GM12878 (cell line): ENCODE measurements at regions of chr15 and their contacts with region 1.

Region 1: DNA sequence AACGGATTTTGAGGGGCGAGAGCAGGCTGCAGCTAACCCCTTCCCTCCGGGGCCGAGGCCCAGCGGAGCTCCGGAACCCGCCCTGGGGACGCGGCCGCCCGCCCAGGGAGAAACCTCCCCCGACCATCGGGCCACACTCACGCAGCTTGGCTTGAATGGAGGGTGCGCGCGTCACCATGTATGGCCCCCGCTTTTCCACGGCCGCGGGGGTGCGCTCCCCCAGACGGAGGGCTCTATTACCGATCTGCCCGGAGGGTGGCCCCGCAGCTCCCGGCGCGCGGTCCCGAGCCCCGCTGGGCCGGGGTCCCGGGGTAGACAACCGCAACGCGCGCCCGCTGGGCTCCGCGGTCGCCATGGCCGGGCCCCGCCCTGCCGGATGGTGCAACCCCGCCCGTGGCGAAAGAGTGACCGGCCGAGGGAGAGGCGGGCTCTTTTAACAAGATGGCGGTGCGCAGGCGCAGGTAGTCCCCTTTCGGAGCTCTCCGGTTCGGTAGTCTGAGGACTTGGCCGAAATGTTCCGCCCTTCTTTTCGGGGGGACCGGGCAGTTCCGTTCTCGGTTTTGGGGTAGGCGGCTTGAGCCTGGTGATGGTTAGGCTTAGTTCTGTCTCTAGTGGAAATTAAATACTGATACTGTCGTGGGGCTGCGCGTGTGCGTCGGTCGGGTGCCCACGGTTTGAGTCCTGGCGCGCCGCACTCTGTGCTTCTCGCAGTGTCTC is at the start of gene FAM219B:
- DNase-seq: peak; percentile 47
- ATAC-seq: peak; percentile 98
- H3K4me3 ChIP-seq: peak within 1 kb of the TSS; percentile 97
- H3K27ac ChIP-seq: peak within 1 kb of the TSS; percentile 76
- H3K4me1 ChIP-seq: peaks cover 6% of the 10 kb centered on the region
- H3K27me3 ChIP-seq: no peaks in the 10 kb centered on the region
- CTCF ChIP-seq: 0 out of 6 replicates have a peak, but pooled peaks of 1 of the 3 experiments have one; percentile 1
- EP300 ChIP-seq: no peak
- POLR2A ChIP-seq: peak; percentile 82
- RAD21 ChIP-seq: no peak
- polyA plus RNA-seq, gene FAM219B: 7.6 to 8.9 TPM

Region 2: DNA sequence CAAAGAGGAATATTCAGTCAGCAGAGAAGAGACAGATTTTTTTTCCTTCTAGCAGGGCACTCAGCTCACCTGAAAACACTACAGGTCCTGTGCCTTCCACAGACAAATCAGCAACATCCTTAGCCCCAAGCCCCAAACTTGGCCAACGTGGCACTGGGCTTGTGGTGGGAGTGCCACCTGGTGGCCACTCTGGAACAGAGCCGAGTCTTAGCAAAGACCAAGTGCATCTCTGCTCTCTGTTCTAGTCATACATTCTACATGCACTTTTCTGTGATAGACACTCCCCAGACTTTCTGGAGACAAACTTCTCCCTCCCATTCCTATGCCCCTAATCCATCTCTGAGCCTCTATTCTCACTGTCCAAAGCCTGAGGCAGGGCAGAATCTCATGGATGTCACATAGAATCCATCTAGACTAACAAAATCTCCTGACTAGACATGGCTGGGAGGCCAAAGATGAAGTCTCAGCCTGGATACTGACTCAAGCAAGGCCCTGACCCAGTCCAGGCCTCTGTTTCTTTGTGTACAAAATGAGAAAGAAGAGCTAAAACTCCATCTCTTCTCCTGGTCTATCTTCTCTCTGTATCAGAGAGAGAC is 467.8 kb before region 1 on chr15:
- CTCF ChIA-PET with region 1: no interaction called
- POLR2A ChIA-PET with region 1: no interaction called
- RAD21 ChIA-PET with region 1: no interaction called
- SMC1A ChIA-PET with region 1: no interaction called
- in situ Hi-C with region 1: no loop called
- intact Hi-C with region 1: no loop called
- DNase-seq: peak; percentile 55
- ATAC-seq: peak; percentile 83
- H3K4me3 ChIP-seq: no peak overlapping the region
- H3K27ac ChIP-seq: no peak overlapping the region
- H3K4me1 ChIP-seq: peaks cover 18% of the 10 kb centered on the region
- H3K27me3 ChIP-seq: no peaks in the 10 kb centered on the region
- CTCF ChIP-seq: peak; percentile 94 to 97 (median 95)
- EP300 ChIP-seq: no peak
- POLR2A ChIP-seq: no peak
- RAD21 ChIP-seq: peak; percentile 100

Region 3: GRCh38 chr15:74781431-74782258 is 125.0 kb before region 1 on chr15 and contains the start of gene CSK:
- CTCF ChIA-PET with region 1: interaction called, 24 read pairs
- POLR2A ChIA-PET with region 1: interaction called, 5 read pairs
- RAD21 ChIA-PET with region 1: interaction called, 6 read pairs
- SMC1A ChIA-PET with region 1: interaction called, 7 read pairs
- in situ Hi-C with region 1: no loop called
- intact Hi-C with region 1: no loop called
- DNase-seq: no peak
- ATAC-seq: no peak; the same call in 2 of the 3 replicates
- H3K4me3 ChIP-seq: peak within 1 kb of the TSS; percentile 94
- H3K27ac ChIP-seq: peak within 1 kb of the TSS; percentile 96
- H3K4me1 ChIP-seq: peaks cover 59% of the 10 kb centered on the region
- H3K27me3 ChIP-seq: no peaks in the 10 kb centered on the region
- CTCF ChIP-seq: peak; percentile 52 to 62 (median 62); a peak in 5 of 6 replicates
- EP300 ChIP-seq: peak in 1 of 2 experiments; percentile 6; a peak in 1 of 4 replicates
- POLR2A ChIP-seq: peak; percentile 78
- RAD21 ChIP-seq: peak; percentile 28; the same call in 1 of the 2 replicates
- polyA plus RNA-seq, gene CSK: 3.4 to 11.5 TPM

Region 4: GRCh38 chr15:74799856-74800547 is 106.6 kb before region 1 on chr15:
- CTCF ChIA-PET with region 1: interaction called, 26 read pairs
- POLR2A ChIA-PET with region 1: no interaction called
- RAD21 ChIA-PET with region 1: interaction called, 7 read pairs
- SMC1A ChIA-PET with region 1: interaction called, 11 read pairs
- in situ Hi-C with region 1: no loop called
- intact Hi-C with region 1: no loop called
- DNase-seq: peak; percentile 76
- ATAC-seq: peak; percentile 94
- H3K4me3 ChIP-seq: no peak overlapping the region
- H3K27ac ChIP-seq: peak overlapping the region; percentile 39
- H3K4me1 ChIP-seq: peaks cover 38% of the 10 kb centered on the region
- H3K27me3 ChIP-seq: no peaks in the 10 kb centered on the region
- CTCF ChIP-seq: peak; percentile 97 to 99 (median 99); a peak in 5 of 6 replicates
- EP300 ChIP-seq: 0 out of 4 replicates have a peak, but pooled peaks of 1 of the 2 experiments have one; percentile 60
- POLR2A ChIP-seq: peak; percentile 69
- RAD21 ChIP-seq: peak; percentile 93

Region 5: GRCh38 chr15:74835307-74835823 is 71.2 kb before region 1 on chr15:
- CTCF ChIA-PET with region 1: interaction called, 59 read pairs
- POLR2A ChIA-PET with region 1: no interaction called
- RAD21 ChIA-PET with region 1: interaction called, 19 read pairs
- SMC1A ChIA-PET with region 1: interaction called, 43 read pairs
- in situ Hi-C with region 1: no loop called
- intact Hi-C with region 1: loop called (anchors 5 kb)
- DNase-seq: no peak
- ATAC-seq: peak; percentile 69
- H3K4me3 ChIP-seq: no peak overlapping the region
- H3K27ac ChIP-seq: no peak overlapping the region
- H3K4me1 ChIP-seq: no peaks in the 10 kb centered on the region
- H3K27me3 ChIP-seq: no peaks in the 10 kb centered on the region
- CTCF ChIP-seq: peak; percentile 65 to 86 (median 83)
- EP300 ChIP-seq: no peak
- POLR2A ChIP-seq: no peak
- RAD21 ChIP-seq: peak; percentile 69

Region 6: DNA sequence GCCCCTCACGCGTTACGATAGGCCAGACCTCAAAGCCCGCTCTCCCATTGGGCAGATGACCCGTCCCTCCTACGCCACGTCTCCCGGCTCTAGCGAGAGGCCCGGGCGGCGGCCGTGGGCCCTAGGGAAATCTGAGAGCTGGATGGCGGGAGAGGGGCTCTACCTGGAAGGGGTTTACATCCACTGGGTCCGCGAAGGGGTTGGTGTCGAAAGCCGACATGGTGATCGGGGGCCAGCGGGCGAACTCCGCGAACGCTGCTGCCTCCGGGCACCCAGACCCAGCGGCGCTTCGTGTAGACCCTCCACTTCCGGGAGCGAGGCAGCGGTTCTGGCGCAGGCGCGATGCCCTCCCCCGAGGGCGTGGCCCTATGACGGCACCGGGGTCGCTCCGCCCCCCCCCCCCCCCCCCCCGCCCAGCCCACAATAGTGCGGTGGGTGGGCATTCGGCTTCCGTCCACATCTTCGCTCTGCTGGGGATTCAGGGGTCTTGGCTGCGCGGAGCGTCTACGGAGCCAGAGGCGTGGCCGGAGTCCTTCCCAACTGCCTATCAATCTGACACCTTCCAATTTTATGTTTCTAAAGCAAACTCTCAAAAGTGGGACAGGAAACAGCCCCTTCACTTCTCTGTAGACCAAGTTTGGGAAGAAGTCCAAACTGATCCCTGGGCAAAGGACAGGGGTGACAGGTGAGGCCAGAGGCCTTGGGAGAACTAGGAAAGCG is 33.4 kb before region 1 on chr15 and contains the start of gene SCAMP2:
- CTCF ChIA-PET with region 1: interaction called, 129 read pairs
- POLR2A ChIA-PET with region 1: interaction called, 9 read pairs
- RAD21 ChIA-PET with region 1: interaction called, 44 read pairs
- SMC1A ChIA-PET with region 1: interaction called, 52 read pairs
- in situ Hi-C with region 1: no loop called
- intact Hi-C with region 1: no loop called
- DNase-seq: peak; percentile 85
- ATAC-seq: peak; percentile 92
- H3K4me3 ChIP-seq: peak within 1 kb of the TSS; percentile 93
- H3K27ac ChIP-seq: peak within 1 kb of the TSS; percentile 94
- H3K4me1 ChIP-seq: peaks cover 28% of the 10 kb centered on the region
- H3K27me3 ChIP-seq: no peaks in the 10 kb centered on the region
- CTCF ChIP-seq: no peak
- EP300 ChIP-seq: no peak
- POLR2A ChIP-seq: peak; percentile 95
- RAD21 ChIP-seq: no peak
- polyA plus RNA-seq, gene SCAMP2: 10.9 to 22.5 TPM

Region 7: DNA sequence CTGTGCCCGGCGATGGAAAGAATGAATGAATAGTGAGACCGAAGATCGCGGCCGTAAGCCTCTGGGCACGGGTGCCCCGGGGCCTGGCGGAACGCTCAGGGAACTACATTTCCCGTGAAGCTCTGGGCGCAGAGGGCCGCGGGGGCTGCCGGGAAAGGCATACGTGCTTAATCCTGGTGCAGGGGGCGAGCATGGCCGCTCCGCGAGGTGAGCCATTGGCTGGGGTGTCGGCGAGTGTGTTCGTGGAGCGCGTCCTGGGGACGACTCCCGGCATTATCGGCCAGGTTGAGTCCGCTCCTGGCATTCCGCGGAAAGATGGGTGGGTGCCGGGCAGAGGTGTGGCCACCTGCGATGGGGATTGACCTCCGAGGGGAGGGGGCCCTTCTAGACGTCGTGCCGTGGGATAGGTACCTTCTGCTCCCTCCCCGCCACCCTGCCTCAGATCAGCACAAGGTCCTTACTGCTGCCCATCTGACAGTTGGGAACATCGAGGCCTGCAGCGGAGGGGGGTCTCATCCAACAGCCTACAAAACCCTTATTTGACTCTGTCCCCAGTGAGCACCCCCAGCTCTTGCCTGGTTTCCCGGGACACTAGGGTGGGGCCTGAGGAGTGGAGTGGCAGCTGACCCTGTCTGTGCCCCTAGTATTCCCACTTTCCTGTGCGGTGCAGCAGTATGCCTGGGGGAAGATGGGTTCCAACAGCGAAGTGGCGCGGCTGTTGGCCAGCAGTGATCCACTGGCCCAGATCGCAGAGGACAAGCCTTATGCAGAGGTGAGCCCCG is 16.5 kb before region 1 on chr15 and contains the start of gene MPI:
- CTCF ChIA-PET with region 1: interaction called, 75 read pairs
- POLR2A ChIA-PET with region 1: interaction called, 7 read pairs
- RAD21 ChIA-PET with region 1: interaction called, 17 read pairs
- SMC1A ChIA-PET with region 1: interaction called, 31 read pairs
- in situ Hi-C with region 1: no loop called
- intact Hi-C with region 1: no loop called
- DNase-seq: no peak
- ATAC-seq: peak; percentile 99
- H3K4me3 ChIP-seq: peak within 1 kb of the TSS; percentile 83
- H3K27ac ChIP-seq: peak within 1 kb of the TSS; percentile 66
- H3K4me1 ChIP-seq: peaks cover 25% of the 10 kb centered on the region
- H3K27me3 ChIP-seq: no peaks in the 10 kb centered on the region
- CTCF ChIP-seq: no peak
- EP300 ChIP-seq: no peak
- POLR2A ChIP-seq: peak; percentile 99
- RAD21 ChIP-seq: no peak
- polyA plus RNA-seq, gene MPI: 38.3 to 43.6 TPM